Head of caudate nucleus (tissue), 42 donors: ENCODE measurements at regions of chr11 and their contacts with region 1.

Region 1: GRCh38 chr11:36292311-36292722 is 3.1 kb upstream of the COMMD9 start:
- DNase-seq: peak in 2 of 42 donors; percentile 17 to 48

Region 2: DNA sequence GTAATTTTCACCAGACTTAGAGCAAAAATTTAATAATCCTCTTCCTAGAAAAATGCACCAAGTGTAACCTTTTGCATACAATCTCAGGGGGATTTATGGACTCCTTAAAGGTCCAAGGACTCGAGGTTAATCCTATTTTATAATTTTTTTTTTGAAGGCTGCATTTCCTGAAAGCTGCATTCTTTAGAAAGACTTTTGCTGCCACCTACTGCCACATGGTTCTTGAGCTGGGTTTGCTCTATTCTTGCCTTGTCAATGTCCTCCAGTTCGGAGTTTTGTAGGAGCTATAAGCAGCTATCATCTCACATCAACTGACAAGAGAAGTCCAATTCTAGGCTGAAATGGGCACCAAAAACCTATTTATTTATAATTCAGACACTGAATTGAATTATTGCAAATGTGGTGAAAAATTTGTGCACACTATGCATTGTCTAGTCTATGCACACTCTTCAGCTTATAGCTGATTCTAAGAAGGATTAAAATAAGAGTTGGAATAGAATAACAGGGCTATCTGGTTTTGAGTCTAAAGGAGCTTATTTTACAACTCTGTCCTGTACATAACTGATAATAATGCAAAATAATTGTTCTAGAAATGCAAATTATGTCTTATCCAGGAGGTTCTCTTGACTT is 186.5 kb after region 1 on chr11:
- intact Hi-C with region 1: loop called (anchors 5 kb)
- DNase-seq: peak in 32 of 42 donors; percentile 27 to 84 (median 64)